CD4-positive, alpha-beta memory T cell (primary cell): ENCODE measurements at regions of chr2 and their contacts with region 1.

Region 1: GRCh38 chr2:180980106-180980942 is at the start of gene UBE2E3:
- DNase-seq: peak; percentile 77 to 83 (median 81)
- H3K4me3 ChIP-seq: peak within 1 kb of the TSS; percentile 59
- H3K4me3 Mint-ChIP-seq: peak within 1 kb of the TSS; percentile 94 to 99 (median 98)
- H3K27ac ChIP-seq: peak within 1 kb of the TSS; percentile 49
- H3K27ac Mint-ChIP-seq: peak within 1 kb of the TSS; percentile 89 to 98 (median 97)
- H3K4me1 ChIP-seq: peaks cover 35% of the 10 kb centered on the region
- H3K4me1 Mint-ChIP-seq: peaks cover 29 to 55% (median 44%) of the 10 kb centered on the region in 4 donors
- H3K27me3 ChIP-seq: no peaks in the 10 kb centered on the region
- H3K27me3 Mint-ChIP-seq: no peaks in the 10 kb centered on the region
- total RNA-seq, gene UBE2E3: 25.0 to 27.0 TPM

Region 2: GRCh38 chr2:180006781-180007579 is 973.3 kb before region 1 on chr2 and contains the start of gene CWC22:
- CTCF ChIA-PET with region 1: no interaction called
- POLR2A ChIA-PET with region 1: interaction called, 3 read pairs
- intact Hi-C with region 1: loop called (anchors 1 kb)
- DNase-seq: peak; percentile 90 to 92 (median 91)
- H3K4me3 ChIP-seq: peak within 1 kb of the TSS; percentile 76 to 89
- H3K4me3 Mint-ChIP-seq: peak within 1 kb of the TSS; percentile 92 to 98 (median 94)
- H3K27ac ChIP-seq: peak within 1 kb of the TSS; percentile 96
- H3K27ac Mint-ChIP-seq: peak within 1 kb of the TSS; percentile 98 to 100 (median 100)
- H3K4me1 ChIP-seq: peaks cover 15% of the 10 kb centered on the region
- H3K4me1 Mint-ChIP-seq: peaks cover 22 to 48% (median 37%) of the 10 kb centered on the region in 4 donors
- H3K27me3 ChIP-seq: no peaks in the 10 kb centered on the region
- H3K27me3 Mint-ChIP-seq: no peaks in the 10 kb centered on the region
- total RNA-seq, gene CWC22: 28.9 to 31.1 TPM

Region 3: DNA sequence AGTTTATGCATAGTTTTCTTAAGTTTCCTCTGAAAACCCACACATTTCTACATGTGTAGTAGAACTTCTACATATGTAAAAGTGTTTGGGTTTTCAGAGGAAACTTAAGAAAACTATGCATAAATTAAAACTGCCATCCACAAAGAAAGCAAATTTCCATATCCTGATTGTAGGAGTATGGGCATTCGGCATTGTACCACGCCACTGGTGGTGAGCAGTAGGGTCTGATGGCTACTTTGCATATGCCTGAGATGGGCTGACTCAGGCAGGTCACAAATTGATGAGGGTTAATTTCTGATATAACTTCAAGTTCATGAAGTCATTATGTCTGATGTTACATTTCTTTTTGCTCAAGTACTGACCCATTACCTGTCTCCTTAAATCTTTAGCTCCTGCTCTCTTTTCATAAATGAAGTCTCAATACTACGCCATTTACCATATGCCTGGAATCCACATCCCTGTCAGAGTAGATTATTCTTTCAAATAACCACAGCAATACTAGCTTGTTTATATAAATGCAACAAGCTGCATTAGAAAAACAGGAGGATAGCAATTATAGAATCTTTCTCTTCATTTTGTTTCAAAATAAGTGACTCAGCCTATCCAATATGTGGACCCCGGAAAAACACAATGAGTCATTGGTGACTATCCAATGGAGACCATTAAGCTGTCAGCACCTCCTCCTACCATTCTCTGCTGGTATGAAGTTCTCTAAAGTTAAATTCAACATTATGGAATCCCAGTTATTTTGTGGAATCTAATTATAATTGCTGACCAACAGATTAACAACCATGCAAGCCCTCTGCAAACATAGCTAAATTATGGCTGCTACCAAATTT is 355.1 kb before region 1 on chr2:
- CTCF ChIA-PET with region 1: no interaction called
- POLR2A ChIA-PET with region 1: no interaction called
- intact Hi-C with region 1: no loop called
- DNase-seq: no peak
- H3K4me3 ChIP-seq: no peak overlapping the region
- H3K4me3 Mint-ChIP-seq: no peak overlapping the region
- H3K27ac ChIP-seq: no peak overlapping the region
- H3K27ac Mint-ChIP-seq: no peak overlapping the region
- H3K4me1 ChIP-seq: no peaks in the 10 kb centered on the region
- H3K4me1 Mint-ChIP-seq: no peaks in the 10 kb centered on the region
- H3K27me3 ChIP-seq: no peaks in the 10 kb centered on the region
- H3K27me3 Mint-ChIP-seq: peaks cover 0 to 3% of the 10 kb centered on the region in 2 donors

Region 4: DNA sequence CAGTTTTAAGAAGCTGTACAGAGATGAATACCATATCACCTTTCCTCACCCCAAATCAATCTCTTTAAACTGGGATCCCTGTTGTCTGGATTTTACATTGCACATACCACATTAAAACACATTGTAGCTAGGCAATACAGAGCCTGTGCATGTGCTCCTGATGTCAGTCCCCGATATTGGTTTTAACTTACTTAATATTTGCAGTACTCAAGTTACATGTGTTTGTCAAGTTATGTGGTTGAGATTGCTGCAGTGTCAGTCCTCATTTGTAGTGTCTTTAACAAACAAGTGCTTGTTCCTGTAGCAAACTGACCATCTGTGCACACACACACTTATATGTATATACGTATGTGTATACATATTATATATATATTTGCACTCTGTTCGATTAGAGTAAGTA is 10.3 kb before region 1 on chr2:
- CTCF ChIA-PET with region 1: interaction called, 10 read pairs
- POLR2A ChIA-PET with region 1: interaction called, 25 read pairs
- intact Hi-C with region 1: no loop called
- DNase-seq: no peak
- H3K4me3 ChIP-seq: no peak overlapping the region
- H3K4me3 Mint-ChIP-seq: no peak overlapping the region
- H3K27ac ChIP-seq: no peak overlapping the region
- H3K27ac Mint-ChIP-seq: no peak overlapping the region
- H3K4me1 ChIP-seq: no peaks in the 10 kb centered on the region
- H3K4me1 Mint-ChIP-seq: no peaks in the 10 kb centered on the region
- H3K27me3 ChIP-seq: no peaks in the 10 kb centered on the region
- H3K27me3 Mint-ChIP-seq: peaks cover 3 to 5% of the 10 kb centered on the region in 2 donors

Region 5: DNA sequence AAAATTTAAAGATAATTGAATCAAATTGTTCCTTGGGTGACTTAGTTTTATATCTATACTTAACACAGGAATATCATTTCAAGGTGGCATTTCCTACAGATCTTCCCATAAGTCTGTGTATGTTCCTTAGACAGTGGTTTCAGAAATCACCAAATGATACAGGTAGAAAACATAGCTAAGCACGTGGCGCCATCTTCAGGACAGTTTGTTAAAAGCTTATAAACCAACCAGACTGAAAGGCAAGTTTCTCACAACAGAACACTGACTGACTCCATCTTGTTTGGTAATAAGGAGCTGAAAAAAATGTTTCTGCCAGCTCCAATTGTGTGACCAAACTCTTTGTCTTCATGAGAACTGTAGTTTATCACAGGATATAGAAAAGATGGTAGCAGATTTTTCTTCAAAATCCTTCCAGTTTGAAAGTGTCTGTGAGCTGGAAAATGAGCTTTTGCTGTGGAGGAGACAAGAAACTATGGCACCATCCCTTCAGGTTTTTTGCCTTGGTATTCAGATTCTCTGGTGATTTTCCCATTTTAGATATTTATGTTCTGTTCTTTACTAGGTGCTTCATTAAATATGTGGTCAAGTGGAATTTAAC is 734.8 kb after region 1 on chr2:
- CTCF ChIA-PET with region 1: interaction called, 3 read pairs
- POLR2A ChIA-PET with region 1: no interaction called
- intact Hi-C with region 1: loop called (anchors 10 kb)
- DNase-seq: peak; percentile 51 to 68 (median 58)
- H3K4me3 ChIP-seq: no peak overlapping the region
- H3K4me3 Mint-ChIP-seq: no peak overlapping the region
- H3K27ac ChIP-seq: no peak overlapping the region
- H3K27ac Mint-ChIP-seq: no peak overlapping the region
- H3K4me1 ChIP-seq: no peaks in the 10 kb centered on the region
- H3K4me1 Mint-ChIP-seq: no peaks in the 10 kb centered on the region
- H3K27me3 ChIP-seq: no peaks in the 10 kb centered on the region
- H3K27me3 Mint-ChIP-seq: peaks cover 0 to 3% of the 10 kb centered on the region in 2 donors

Region 6: DNA sequence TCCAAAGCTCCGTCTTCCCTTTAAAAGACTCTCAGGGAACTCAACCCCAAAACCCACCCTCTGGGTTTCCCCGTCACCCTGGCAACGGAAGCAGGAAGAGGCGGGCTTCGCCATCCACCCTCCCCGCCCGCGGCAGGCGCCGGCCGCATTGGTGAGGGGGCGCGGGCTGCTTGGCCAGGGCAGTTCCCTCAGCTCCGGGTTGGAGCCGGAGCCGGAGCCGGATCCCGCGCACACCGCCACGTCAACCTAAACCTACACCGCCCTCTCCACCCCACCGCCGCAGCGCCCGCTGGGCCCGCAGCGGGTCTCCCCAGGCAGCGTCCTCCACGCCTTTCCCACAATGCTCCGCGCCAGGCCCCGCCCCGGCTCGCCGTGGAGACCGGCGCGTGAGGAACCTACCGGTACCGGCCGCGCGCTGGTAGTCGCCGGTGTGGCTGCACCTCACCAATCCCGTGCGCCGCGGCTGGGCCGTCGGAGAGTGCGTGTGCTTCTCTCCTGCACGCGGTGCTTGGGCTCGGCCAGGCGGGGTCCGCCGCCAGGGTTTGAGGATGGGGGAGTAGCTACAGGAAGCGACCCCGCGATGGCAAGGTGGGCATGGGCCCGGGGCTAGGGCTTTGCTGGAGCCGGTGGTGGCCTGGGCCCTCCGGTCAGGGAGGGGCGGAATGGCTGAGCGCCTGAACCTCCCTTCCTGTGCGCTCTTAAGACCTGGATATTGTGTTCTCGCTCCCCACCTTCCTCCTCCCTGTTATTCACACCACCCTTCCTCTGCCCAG is 1735.8 kb after region 1 on chr2 and contains the start of gene DNAJC10:
- CTCF ChIA-PET with region 1: no interaction called
- POLR2A ChIA-PET with region 1: no interaction called
- intact Hi-C with region 1: loop called (anchors 5 kb)
- DNase-seq: peak; percentile 86 to 92 (median 90)
- H3K4me3 ChIP-seq: peak within 1 kb of the TSS; percentile 83 to 85
- H3K4me3 Mint-ChIP-seq: no peak within 1 kb of the TSS
- H3K27ac ChIP-seq: peak within 1 kb of the TSS; percentile 68
- H3K27ac Mint-ChIP-seq: no peak within 1 kb of the TSS
- H3K4me1 ChIP-seq: peaks cover 25% of the 10 kb centered on the region
- H3K4me1 Mint-ChIP-seq: peaks cover 0 to 11% (median 2%) of the 10 kb centered on the region in 4 donors
- H3K27me3 ChIP-seq: no peaks in the 10 kb centered on the region
- H3K27me3 Mint-ChIP-seq: peaks cover under 1 to 2% of the 10 kb centered on the region in 2 donors
- total RNA-seq, gene DNAJC10: 56.5 to 57.3 TPM